H1 (cell line): ENCODE measurements at regions of chr1 and their contacts with region 1.

Region 1: GRCh38 chr1:36285448-36286101 is 20.6 kb upstream of the SH3D21 start:
- DNase-seq: peak in 1 of 2 experiments; percentile 53
- H3K4me3 ChIP-seq: no peak overlapping the region
- H3K27ac ChIP-seq: no peak overlapping the region
- H3K4me1 ChIP-seq: no peaks in the 10 kb centered on the region
- H3K27me3 ChIP-seq: no peaks in the 10 kb centered on the region
- CTCF ChIP-seq: peak in 2 of 3 experiments; percentile 66 to 67; a peak in 3 of 4 replicates
- EP300 ChIP-seq: no peak
- POLR2A ChIP-seq: no peak
- RAD21 ChIP-seq: peak; percentile 78 to 81

Region 2: DNA sequence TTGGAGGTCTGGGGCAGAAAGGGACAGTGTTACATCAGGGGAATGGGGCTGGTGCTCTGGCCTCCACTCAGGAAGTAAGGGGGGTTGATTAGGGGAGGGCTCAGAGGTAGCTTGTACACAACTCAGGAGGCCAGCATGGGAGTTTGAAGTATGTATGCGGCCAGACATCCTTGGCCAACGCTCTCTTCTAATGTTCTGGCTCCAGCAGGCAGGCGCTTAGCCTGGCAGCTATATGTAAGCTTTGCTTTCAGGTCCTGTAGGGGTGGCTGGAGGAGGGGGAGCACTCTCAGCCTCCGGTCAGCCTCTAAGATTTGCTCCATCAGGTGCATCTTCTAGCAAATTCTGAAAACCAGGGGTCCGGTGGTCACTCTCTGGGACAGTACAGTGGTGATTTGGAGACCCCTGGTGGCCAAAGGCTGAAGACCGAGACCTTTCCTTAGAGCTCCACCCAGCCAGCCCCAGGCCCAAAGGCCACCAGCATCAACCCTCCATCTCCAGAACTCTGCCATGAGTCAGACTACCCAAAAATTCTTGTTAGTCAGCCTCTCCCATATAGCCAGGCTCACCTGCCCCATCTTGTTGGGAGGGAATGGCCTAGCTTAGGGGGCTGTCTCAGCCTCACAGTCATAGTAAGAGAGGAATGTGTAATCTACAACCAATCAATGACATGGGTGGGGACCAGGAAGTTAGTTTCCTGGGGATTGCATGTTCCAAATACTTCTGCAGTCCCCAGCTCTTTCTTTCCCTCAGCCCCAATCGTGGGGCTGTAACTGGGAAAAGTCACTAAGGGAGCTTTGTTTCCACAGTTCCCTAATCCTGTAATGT is 150.9 kb before region 1 on chr1:
- CTCF ChIA-PET with region 1: interaction called, 10 read pairs
- POLR2A ChIA-PET with region 1: no interaction called
- DNase-seq: peak in 1 of 2 experiments; percentile 90
- H3K4me3 ChIP-seq: no peak overlapping the region
- H3K27ac ChIP-seq: no peak overlapping the region
- H3K4me1 ChIP-seq: peaks cover 0 to 2% (median 0%) of the 10 kb centered on the region in 4 experiments; a peak in 2 of 7 replicates
- H3K27me3 ChIP-seq: no peaks in the 10 kb centered on the region
- CTCF ChIP-seq: peak; percentile 77 to 91 (median 83)
- EP300 ChIP-seq: no peak
- POLR2A ChIP-seq: no peak
- RAD21 ChIP-seq: peak; percentile 90 to 92

Region 3: DNA sequence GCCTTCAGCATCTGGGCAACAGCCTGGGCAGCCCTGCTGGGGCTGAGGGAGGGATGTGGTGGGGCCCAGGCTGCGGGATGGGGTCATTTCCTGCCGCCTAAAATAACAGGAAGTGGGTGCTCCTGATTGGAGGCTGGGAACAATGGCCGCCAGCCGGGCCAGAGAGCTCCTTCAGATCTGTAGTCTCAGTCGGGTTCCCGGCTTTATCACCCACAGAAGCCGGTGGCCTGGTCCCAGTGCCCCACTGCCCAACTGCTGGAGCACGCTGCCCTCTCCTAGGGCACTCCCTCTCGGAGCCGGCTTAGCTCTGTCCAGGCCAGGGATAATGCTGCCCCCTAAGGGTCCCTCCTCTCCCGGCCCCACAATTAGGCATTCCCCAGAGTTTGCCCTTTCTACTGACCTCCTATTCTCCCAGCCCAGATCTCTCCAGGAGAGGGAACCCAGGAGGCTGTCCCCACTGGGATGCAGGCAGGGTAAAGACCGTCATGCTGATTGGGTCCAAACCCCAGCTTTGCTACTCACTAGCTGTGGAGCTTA is 124.6 kb before region 1 on chr1:
- CTCF ChIA-PET with region 1: interaction called, 24 read pairs
- POLR2A ChIA-PET with region 1: interaction called, 3 read pairs
- DNase-seq: peak in 1 of 2 experiments; percentile 82
- H3K4me3 ChIP-seq: peak overlapping the region; percentile 29 to 60 (median 48)
- H3K27ac ChIP-seq: peak overlapping the region; percentile 89; the same call in 1 of the 2 replicates
- H3K4me1 ChIP-seq: peaks cover 0 to 22% (median 13%) of the 10 kb centered on the region in 4 experiments; a peak in 6 of 7 replicates
- H3K27me3 ChIP-seq: no peaks in the 10 kb centered on the region
- CTCF ChIP-seq: peak; percentile 54 to 69 (median 59)
- EP300 ChIP-seq: no peak
- POLR2A ChIP-seq: peak; percentile 93 to 96
- RAD21 ChIP-seq: peak; percentile 42 to 45

Region 4: GRCh38 chr1:36239941-36240637 is 45.5 kb before region 1 on chr1:
- CTCF ChIA-PET with region 1: interaction called, 11 read pairs
- POLR2A ChIA-PET with region 1: no interaction called
- DNase-seq: no peak
- H3K4me3 ChIP-seq: no peak overlapping the region
- H3K27ac ChIP-seq: no peak overlapping the region
- H3K4me1 ChIP-seq: no peaks in the 10 kb centered on the region; a peak in 1 of 7 replicates
- H3K27me3 ChIP-seq: no peaks in the 10 kb centered on the region
- CTCF ChIP-seq: no peak
- EP300 ChIP-seq: no peak
- POLR2A ChIP-seq: no peak
- RAD21 ChIP-seq: no peak

Region 5: DNA sequence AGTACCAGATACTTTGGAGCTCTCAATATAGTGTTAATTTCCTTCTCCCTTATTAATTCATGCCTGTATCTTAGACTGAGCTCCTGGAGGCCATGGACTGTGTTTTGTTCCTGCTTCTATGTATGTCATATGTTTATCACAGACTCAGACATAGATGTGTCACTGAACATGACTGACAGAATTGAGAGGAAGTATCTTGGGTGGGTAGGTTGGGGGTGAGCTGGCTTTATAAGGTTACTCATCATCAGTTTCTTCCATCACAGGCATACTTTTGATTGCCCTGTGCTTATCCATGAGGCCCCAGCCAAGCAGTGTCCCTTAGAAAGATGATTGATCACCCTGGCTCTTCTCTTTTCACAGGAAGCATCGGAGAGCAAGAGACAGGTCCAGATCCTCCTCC is 15.0 kb after region 1 on chr1:
- CTCF ChIA-PET with region 1: interaction called, 68 read pairs
- POLR2A ChIA-PET with region 1: interaction called, 7 read pairs
- DNase-seq: no peak
- H3K4me3 ChIP-seq: no peak overlapping the region
- H3K27ac ChIP-seq: no peak overlapping the region
- H3K4me1 ChIP-seq: no peaks in the 10 kb centered on the region; a peak in 1 of 7 replicates
- H3K27me3 ChIP-seq: no peaks in the 10 kb centered on the region
- CTCF ChIP-seq: no peak
- EP300 ChIP-seq: no peak
- POLR2A ChIP-seq: no peak
- RAD21 ChIP-seq: no peak